SK-N-SH (cell line): ENCODE measurements at regions of chr19 and their contacts with region 1.

Region 1: DNA sequence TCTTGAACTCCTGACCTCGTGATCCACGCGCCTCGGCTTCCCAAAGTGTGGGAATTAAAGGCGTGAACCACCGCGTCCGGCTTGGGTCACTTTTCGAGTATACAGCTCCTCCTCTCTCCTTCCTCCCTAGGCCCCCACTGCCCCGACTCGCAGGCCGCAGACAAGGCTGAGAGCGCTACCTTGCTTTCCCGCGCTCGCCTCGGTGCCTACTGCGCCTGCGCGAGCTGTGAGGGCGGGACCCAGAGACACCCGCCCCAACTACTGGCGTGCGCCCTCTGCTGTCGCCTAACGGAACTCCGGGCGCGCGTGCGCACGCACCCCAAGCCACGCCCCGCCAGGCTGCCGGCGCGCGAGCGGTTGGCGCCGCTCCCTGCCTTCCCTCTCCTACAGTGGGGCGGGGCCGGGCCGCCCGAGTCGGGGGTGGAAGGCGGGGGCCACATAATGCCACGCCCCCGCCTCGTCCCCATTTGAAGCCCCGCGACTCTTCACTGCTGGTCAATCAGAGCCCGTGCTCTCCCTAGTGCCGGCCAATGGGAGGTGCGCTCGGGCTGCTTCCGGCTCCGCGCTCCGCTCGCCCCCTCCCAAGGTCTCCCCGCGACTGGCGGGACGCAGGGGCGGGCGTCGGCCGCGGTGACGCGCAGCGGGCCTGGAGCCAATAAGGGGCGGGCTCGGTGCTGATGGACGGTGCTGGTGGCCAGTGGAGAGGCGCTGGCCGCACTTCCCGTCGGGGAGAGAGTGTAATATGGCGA is at the start of gene RAB8A:
- DNase-seq: peak; percentile 99
- H3K4me3 ChIP-seq: peak within 1 kb of the TSS; percentile 82 to 100
- H3K27ac ChIP-seq: peak within 1 kb of the TSS; percentile 66 to 74
- H3K4me1 ChIP-seq: peaks cover 9 to 10% of the 10 kb centered on the region in 2 experiments
- H3K27me3 ChIP-seq: no peaks in the 10 kb centered on the region
- CTCF ChIP-seq: peak; percentile 71
- EP300 ChIP-seq: no peak
- RAD21 ChIP-seq: peak; percentile 62
- polyA plus RNA-seq, gene RAB8A: 55.2 and 58.0 TPM in 2 replicates

Region 2: GRCh38 chr19:15976836-15977689 is 134.3 kb before region 1 on chr19:
- CTCF ChIA-PET with region 1: no interaction called
- POLR2A ChIA-PET with region 1: no interaction called
- DNase-seq: no peak
- H3K4me3 ChIP-seq: no peak overlapping the region
- H3K27ac ChIP-seq: no peak overlapping the region
- H3K4me1 ChIP-seq: no peaks in the 10 kb centered on the region
- H3K27me3 ChIP-seq: no peaks in the 10 kb centered on the region
- CTCF ChIP-seq: no peak
- EP300 ChIP-seq: no peak
- RAD21 ChIP-seq: no peak

Region 3: DNA sequence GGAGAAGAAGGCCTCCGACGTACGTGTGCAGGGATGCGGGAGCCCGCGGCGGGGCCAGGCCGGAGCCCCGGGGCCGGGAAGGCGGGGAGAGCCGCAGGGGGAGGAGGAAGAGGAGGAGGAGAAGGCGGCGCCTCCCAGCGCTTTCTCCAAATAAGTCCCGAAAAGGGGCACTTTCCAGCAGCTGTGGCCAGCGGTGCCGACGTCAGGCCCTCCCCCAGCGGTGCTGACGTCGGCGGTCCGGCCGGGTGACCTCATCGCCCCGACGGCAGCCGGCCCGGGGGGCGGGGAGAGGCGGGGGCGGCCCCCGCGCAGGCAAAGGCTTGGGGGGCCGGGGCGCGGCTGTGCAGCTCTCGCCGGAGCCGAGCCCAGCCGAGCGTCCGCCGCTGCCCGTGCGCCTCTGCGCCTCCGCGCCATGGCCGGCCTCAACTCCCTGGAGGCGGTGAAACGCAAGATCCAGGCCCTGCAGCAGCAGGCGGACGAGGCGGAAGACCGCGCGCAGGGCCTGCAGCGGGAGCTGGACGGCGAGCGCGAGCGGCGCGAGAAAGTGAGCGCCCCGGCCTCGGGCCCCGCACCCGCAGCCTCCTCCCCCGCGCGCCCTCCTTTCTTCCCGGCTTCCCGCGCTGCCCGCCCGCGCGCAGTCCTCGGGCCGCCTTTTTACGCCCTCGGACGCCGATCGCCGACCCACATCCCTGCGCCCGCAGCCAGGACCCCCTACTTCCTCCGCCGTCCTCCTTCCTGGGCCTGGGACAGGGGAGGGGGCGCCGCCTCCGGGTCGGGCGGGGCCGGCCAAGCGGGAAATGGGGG is 35.0 kb before region 1 on chr19 and contains the start of gene TPM4:
- CTCF ChIA-PET with region 1: interaction called, 24 read pairs
- POLR2A ChIA-PET with region 1: no interaction called
- DNase-seq: peak; percentile 86
- H3K4me3 ChIP-seq: peak within 1 kb of the TSS; percentile 74 to 78
- H3K27ac ChIP-seq: peak within 1 kb of the TSS; percentile 99
- H3K4me1 ChIP-seq: peaks cover 12 to 14% of the 10 kb centered on the region in 2 experiments
- H3K27me3 ChIP-seq: no peaks in the 10 kb centered on the region
- CTCF ChIP-seq: no peak
- EP300 ChIP-seq: no peak
- RAD21 ChIP-seq: no peak
- polyA plus RNA-seq, gene TPM4: 415 and 440 TPM in 2 replicates

Region 4: DNA sequence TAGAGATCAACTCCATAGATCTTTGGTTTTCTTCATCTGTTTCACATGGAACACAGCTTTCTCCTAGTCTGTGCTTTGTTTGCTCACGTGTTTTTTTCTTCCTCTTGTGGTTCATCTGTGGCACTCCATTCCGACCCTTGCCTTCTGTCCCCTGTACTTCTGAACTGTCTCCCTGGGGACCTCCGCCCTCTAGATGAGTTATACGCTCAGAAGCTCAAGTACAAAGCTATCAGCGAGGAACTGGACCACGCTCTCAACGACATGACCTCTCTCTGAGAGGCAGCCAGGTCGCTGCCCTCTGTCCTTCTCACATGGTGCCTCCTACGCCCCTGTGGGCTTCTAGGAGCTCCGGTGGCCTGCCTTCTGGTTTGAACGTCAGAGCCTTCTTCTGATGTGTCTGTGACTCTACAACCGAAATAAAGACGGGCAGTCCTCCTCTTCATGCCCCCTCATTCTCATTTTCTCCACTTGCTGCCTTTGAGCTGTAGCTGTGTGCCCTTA is 16.2 kb before region 1 on chr19:
- CTCF ChIA-PET with region 1: interaction called, 10 read pairs
- POLR2A ChIA-PET with region 1: interaction called, 4 read pairs
- DNase-seq: no peak
- H3K4me3 ChIP-seq: no peak overlapping the region
- H3K27ac ChIP-seq: no peak overlapping the region
- H3K4me1 ChIP-seq: no peaks in the 10 kb centered on the region
- H3K27me3 ChIP-seq: no peaks in the 10 kb centered on the region
- CTCF ChIP-seq: no peak
- EP300 ChIP-seq: no peak
- RAD21 ChIP-seq: no peak

Region 5: GRCh38 chr19:16274447-16274846 is 163.1 kb after region 1 on chr19:
- CTCF ChIA-PET with region 1: no interaction called
- POLR2A ChIA-PET with region 1: no interaction called
- DNase-seq: no peak
- H3K4me3 ChIP-seq: no peak overlapping the region
- H3K27ac ChIP-seq: no peak overlapping the region
- H3K4me1 ChIP-seq: peaks cover 0 to 4% of the 10 kb centered on the region in 2 experiments; a peak in 1 of 4 replicates
- H3K27me3 ChIP-seq: peaks cover 25% of the 10 kb centered on the region
- CTCF ChIP-seq: no peak
- EP300 ChIP-seq: no peak
- RAD21 ChIP-seq: no peak